ENCODE measurements at regions of chr1 and their contacts with region 1.

Region 1: DNA sequence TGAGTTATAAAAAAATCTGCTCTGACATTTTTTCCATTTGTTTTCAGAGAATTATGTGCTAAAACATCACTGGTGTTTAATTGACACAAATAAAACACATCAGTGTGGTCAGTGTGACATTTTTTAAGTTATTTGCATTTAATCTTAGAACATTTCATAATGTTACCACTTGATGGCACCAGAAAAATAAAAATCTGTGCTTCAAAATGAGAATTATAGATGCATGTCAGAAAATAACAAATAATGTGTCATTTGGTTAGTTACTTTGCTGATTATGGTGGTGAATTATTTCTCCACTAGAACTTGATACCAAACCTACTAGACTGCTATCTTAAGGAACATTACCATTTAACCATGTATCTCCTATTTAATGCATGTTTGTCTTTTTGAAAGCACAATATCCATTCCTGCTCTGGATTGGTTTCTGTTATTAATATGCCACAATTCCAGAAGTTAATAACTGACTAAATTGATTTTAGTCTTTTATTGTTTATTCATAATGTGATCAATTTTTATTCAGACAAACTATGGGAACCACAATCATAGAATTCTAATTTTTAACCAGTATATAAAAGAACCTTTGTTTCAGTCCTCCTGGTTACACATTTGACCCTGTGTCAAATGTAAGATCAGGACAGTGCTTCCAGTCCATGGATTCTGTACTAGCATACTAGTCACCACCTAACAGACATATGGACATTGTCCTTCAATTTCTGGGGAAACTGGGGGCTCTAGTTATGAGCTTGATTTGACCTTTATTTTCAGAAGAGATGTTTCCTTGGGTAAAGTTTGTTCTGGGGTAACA is 81.0 kb downstream of the RPS6KC1 start:
- DNase-seq: no peak
- H3K4me3 ChIP-seq: no peak overlapping the region
- H3K27ac ChIP-seq: no peak overlapping the region
- H3K4me1 ChIP-seq: peaks cover 0 to 5% of the 10 kb centered on the region in 2 donors
- H3K27me3 ChIP-seq: no peaks in the 10 kb centered on the region
- CTCF ChIP-seq: peak in 1 of 3 experiments; percentile 24

Region 2: GRCh38 chr1:213166852-213167251 is 34.8 kb after region 1 on chr1:
- intact Hi-C with region 1: loop called (anchors 5 kb)
- DNase-seq: no peak
- H3K4me3 ChIP-seq: peak overlapping the region in 1 of 2 donors; percentile 53
- H3K27ac ChIP-seq: peak overlapping the region; percentile 38 to 50
- H3K4me1 ChIP-seq: peaks cover 0 to 18% of the 10 kb centered on the region in 2 donors
- H3K27me3 ChIP-seq: no peaks in the 10 kb centered on the region
- CTCF ChIP-seq: no peak

Region 3: GRCh38 chr1:213389061-213389581 is 257.1 kb after region 1 on chr1:
- intact Hi-C with region 1: no loop called
- DNase-seq: no peak
- H3K4me3 ChIP-seq: no peak overlapping the region
- H3K27ac ChIP-seq: no peak overlapping the region
- H3K4me1 ChIP-seq: no peaks in the 10 kb centered on the region
- H3K27me3 ChIP-seq: no peaks in the 10 kb centered on the region
- CTCF ChIP-seq: no peak

Measured in ascending aorta (tissue), 2 donors.